H1 (cell line): ENCODE measurements at regions of chr5 and their contacts with region 1.

Region 1: GRCh38 chr5:154811653-154812365 is 38.6 kb downstream of the FAXDC2 start:
- DNase-seq: peak; percentile 17 to 72
- H3K4me3 ChIP-seq: no peak overlapping the region
- H3K27ac ChIP-seq: no peak overlapping the region
- H3K4me1 ChIP-seq: no peaks in the 10 kb centered on the region
- H3K27me3 ChIP-seq: no peaks in the 10 kb centered on the region
- CTCF ChIP-seq: peak; percentile 71 to 79 (median 72)
- EP300 ChIP-seq: no peak
- POLR2A ChIP-seq: no peak
- RAD21 ChIP-seq: peak; percentile 71 to 76

Region 2: GRCh38 chr5:154791535-154791934 is 20.3 kb before region 1 on chr5:
- CTCF ChIA-PET with region 1: interaction called, 11 read pairs
- POLR2A ChIA-PET with region 1: interaction called, 4 read pairs
- DNase-seq: no peak
- H3K4me3 ChIP-seq: no peak overlapping the region
- H3K27ac ChIP-seq: no peak overlapping the region
- H3K4me1 ChIP-seq: peaks cover 0 to 5% (median 2%) of the 10 kb centered on the region in 4 experiments; a peak in 4 of 7 replicates
- H3K27me3 ChIP-seq: no peaks in the 10 kb centered on the region
- CTCF ChIP-seq: no peak
- EP300 ChIP-seq: no peak
- POLR2A ChIP-seq: no peak
- RAD21 ChIP-seq: no peak

Region 3: DNA sequence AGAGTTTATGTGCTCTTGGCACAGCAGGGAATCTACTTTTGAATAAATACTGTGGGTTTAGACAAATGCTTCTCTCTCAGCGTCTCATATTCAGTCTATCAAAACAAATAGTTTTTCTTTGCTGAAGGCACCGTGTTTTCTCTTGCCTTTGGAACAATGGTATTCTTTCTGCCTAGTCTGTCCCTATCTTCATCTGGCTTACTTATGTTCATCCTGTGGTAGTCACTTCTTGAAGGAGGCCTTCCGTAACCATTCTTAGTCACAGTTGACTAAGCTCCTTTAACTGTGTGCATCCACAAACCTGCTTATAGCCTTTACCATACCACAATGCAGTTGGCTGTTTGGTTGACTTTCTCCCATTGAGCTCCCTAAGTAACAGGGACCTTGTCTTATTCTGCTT is 10.7 kb before region 1 on chr5:
- CTCF ChIA-PET with region 1: interaction called, 11 read pairs
- POLR2A ChIA-PET with region 1: interaction called, 3 read pairs
- DNase-seq: no peak
- H3K4me3 ChIP-seq: no peak overlapping the region
- H3K27ac ChIP-seq: no peak overlapping the region
- H3K4me1 ChIP-seq: no peaks in the 10 kb centered on the region
- H3K27me3 ChIP-seq: no peaks in the 10 kb centered on the region
- CTCF ChIP-seq: no peak
- EP300 ChIP-seq: no peak
- POLR2A ChIP-seq: no peak
- RAD21 ChIP-seq: no peak

Region 4: GRCh38 chr5:154829589-154830218 is 17.9 kb after region 1 on chr5:
- CTCF ChIA-PET with region 1: no interaction called
- POLR2A ChIA-PET with region 1: no interaction called
- DNase-seq: no peak
- H3K4me3 ChIP-seq: no peak overlapping the region
- H3K27ac ChIP-seq: no peak overlapping the region
- H3K4me1 ChIP-seq: peaks cover 0 to 2% (median 0%) of the 10 kb centered on the region in 4 experiments; a peak in 2 of 7 replicates
- H3K27me3 ChIP-seq: no peaks in the 10 kb centered on the region
- CTCF ChIP-seq: no peak
- EP300 ChIP-seq: no peak
- POLR2A ChIP-seq: no peak
- RAD21 ChIP-seq: no peak